ENCODE measurements at regions of chr19 and their contacts with region 1.

Region 1: GRCh38 chr19:19554074-19555023 is 16.3 kb downstream of the CILP2 start:
- DNase-seq: peak; percentile 84
- ATAC-seq: peak; percentile 86
- H3K4me3 Mint-ChIP-seq: no peak overlapping the region
- H3K27ac Mint-ChIP-seq: no peak overlapping the region
- H3K4me1 Mint-ChIP-seq: 0 out of 2 replicates have a peak, but pooled peaks cover 4% of the 10 kb centered on the region
- H3K27me3 Mint-ChIP-seq: no peaks in the 10 kb centered on the region
- CTCF ChIP-seq: peak; percentile 86

Region 2: GRCh38 chr19:19515764-19516519 is 38.4 kb before region 1 on chr19 and contains the start of gene NDUFA13:
- CTCF ChIA-PET with region 1: interaction called, 12 read pairs
- POLR2A ChIA-PET with region 1: no interaction called
- DNase-seq: peak; percentile 95
- ATAC-seq: peak; percentile 84
- H3K4me3 Mint-ChIP-seq: peak within 1 kb of the TSS; percentile 90
- H3K27ac Mint-ChIP-seq: peak within 1 kb of the TSS; percentile 88
- H3K4me1 Mint-ChIP-seq: peaks cover 5% of the 10 kb centered on the region; the same call in 1 of the 2 replicates
- H3K27me3 Mint-ChIP-seq: no peaks in the 10 kb centered on the region
- CTCF ChIP-seq: no peak
- total RNA-seq, gene NDUFA13: 519 to 568 TPM (median 552 TPM) in 3 replicates

Region 3: DNA sequence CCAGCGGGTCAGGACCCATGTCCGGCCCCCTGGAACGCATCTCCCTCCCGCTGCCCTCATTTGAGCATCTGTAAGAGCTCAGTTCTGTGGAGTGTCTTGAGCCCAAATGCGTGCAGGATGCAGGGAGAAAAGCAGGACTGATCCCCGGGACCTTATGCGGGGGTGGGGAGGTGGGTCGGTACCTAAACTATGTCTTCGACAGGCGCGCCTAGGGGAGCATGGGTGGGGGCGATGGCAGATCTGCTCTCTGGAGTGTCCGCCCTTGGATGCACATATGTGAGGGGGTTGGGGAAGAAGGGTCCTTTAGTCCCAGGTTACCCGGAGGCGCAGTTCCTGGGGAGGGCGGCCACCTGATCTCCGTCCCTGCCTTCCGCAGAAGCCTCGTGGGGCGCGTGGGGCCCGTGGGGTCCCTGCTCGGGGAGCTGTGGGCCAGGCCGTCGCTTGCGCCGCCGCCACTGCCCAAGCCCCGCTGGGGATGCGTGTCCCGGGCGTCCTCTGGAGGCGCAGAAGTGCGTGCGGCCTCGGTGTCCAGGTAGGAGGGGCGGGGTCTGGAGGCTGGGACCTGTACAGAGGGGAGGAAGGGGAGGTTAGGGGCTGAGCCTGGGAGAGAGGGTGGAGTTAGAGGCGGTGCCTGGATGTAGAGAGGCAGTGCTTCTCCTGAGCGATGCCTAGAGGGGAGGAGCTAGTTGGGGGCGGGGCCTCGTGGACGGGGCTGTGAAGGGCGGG is 13.5 kb before region 1 on chr19:
- CTCF ChIA-PET with region 1: interaction called, 408 read pairs
- POLR2A ChIA-PET with region 1: interaction called, 3 read pairs
- DNase-seq: peak; percentile 98
- ATAC-seq: peak; percentile 95
- H3K4me3 Mint-ChIP-seq: peak overlapping the region; percentile 88
- H3K27ac Mint-ChIP-seq: peak overlapping the region; percentile 85
- H3K4me1 Mint-ChIP-seq: peaks cover 6% of the 10 kb centered on the region
- H3K27me3 Mint-ChIP-seq: peaks cover 36% of the 10 kb centered on the region
- CTCF ChIP-seq: no peak

Region 4: DNA sequence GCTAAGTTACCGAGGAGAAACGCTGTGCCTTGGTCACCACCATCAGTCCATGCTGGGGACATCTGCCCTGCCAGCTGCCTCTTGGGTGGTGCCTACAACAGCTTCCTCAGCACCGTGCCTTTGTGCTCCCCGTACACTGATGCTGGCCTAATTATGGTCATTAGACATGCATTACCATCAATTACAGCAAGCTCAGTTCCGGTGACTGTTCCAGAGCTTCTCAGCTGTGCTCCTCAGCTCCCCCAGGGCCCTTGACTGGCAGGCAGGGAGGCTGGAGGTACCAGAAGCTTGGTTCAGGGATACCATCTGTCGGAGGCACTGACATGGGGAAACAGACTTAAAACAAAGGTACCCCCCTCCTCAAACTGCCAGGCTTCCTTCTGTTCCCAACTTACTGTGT is 23.9 kb after region 1 on chr19:
- CTCF ChIA-PET with region 1: interaction called, 16 read pairs
- POLR2A ChIA-PET with region 1: interaction called, 4 read pairs
- DNase-seq: no peak
- ATAC-seq: no peak
- H3K4me3 Mint-ChIP-seq: no peak overlapping the region
- H3K27ac Mint-ChIP-seq: no peak overlapping the region
- H3K4me1 Mint-ChIP-seq: peaks cover 7% of the 10 kb centered on the region
- H3K27me3 Mint-ChIP-seq: no peaks in the 10 kb centered on the region; the same call in 1 of the 2 replicates
- CTCF ChIP-seq: no peak

Region 5: DNA sequence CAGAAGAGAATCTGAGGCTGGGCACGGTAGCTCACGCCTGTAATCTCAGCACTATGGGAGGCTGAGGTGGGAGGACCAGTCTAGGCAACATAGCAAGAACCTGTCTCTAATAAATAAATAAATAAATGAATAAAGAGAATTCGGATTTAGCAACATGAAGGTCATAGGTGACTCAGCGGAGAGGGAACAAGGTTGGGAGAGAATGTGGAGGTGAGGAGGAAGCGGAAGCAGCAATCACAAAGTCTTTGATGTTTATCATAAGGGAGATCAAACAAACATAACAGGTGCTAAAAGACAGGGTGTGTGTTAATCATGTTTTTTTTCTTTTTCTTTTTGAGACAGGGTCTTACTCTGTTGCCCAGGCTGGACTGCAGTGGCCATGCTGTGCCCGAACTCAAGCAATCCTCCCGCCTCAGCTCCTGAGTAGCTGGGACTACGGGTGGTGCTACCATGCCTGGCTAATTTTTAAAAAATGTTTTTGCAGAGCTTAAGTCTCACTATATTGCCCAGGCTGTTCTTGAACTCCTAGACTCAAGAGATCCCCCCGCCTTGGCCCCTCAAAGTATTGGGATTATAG is 47.9 kb after region 1 on chr19:
- CTCF ChIA-PET with region 1: interaction called, 10 read pairs
- POLR2A ChIA-PET with region 1: interaction called, 4 read pairs
- DNase-seq: no peak
- ATAC-seq: no peak
- H3K4me3 Mint-ChIP-seq: no peak overlapping the region
- H3K27ac Mint-ChIP-seq: no peak overlapping the region
- H3K4me1 Mint-ChIP-seq: peaks cover 23% of the 10 kb centered on the region
- H3K27me3 Mint-ChIP-seq: no peaks in the 10 kb centered on the region
- CTCF ChIP-seq: no peak

Region 6: GRCh38 chr19:19643158-19644053 is 89.1 kb after region 1 on chr19 and contains the start of gene GMIP:
- CTCF ChIA-PET with region 1: interaction called, 21 read pairs
- POLR2A ChIA-PET with region 1: interaction called, 3 read pairs
- DNase-seq: peak; percentile 93
- ATAC-seq: peak; percentile 94
- H3K4me3 Mint-ChIP-seq: peak within 1 kb of the TSS; percentile 94
- H3K27ac Mint-ChIP-seq: peak within 1 kb of the TSS; percentile 84
- H3K4me1 Mint-ChIP-seq: peaks cover 12% of the 10 kb centered on the region
- H3K27me3 Mint-ChIP-seq: peaks cover under 1% of the 10 kb centered on the region; the same call in 1 of the 2 replicates
- CTCF ChIP-seq: peak; percentile 92
- total RNA-seq, gene GMIP: 19.8 to 23.0 TPM (median 21.9 TPM) in 3 replicates

Region 7: GRCh38 chr19:19758164-19758563 is 203.8 kb after region 1 on chr19:
- CTCF ChIA-PET with region 1: no interaction called
- POLR2A ChIA-PET with region 1: no interaction called
- DNase-seq: no peak
- ATAC-seq: peak; percentile 58; the same call in 1 of the 2 replicates
- H3K4me3 Mint-ChIP-seq: no peak overlapping the region
- H3K27ac Mint-ChIP-seq: no peak overlapping the region
- H3K4me1 Mint-ChIP-seq: no peaks in the 10 kb centered on the region
- H3K27me3 Mint-ChIP-seq: no peaks in the 10 kb centered on the region
- CTCF ChIP-seq: no peak

Region 8: GRCh38 chr19:19805480-19805879 is 251.1 kb after region 1 on chr19:
- CTCF ChIA-PET with region 1: no interaction called
- POLR2A ChIA-PET with region 1: no interaction called
- DNase-seq: no peak
- ATAC-seq: no peak
- H3K4me3 Mint-ChIP-seq: no peak overlapping the region
- H3K27ac Mint-ChIP-seq: no peak overlapping the region
- H3K4me1 Mint-ChIP-seq: no peaks in the 10 kb centered on the region
- H3K27me3 Mint-ChIP-seq: no peaks in the 10 kb centered on the region
- CTCF ChIP-seq: no peak